ENCODE measurements at regions of chr22 and their contacts with region 1.

Region 1: DNA sequence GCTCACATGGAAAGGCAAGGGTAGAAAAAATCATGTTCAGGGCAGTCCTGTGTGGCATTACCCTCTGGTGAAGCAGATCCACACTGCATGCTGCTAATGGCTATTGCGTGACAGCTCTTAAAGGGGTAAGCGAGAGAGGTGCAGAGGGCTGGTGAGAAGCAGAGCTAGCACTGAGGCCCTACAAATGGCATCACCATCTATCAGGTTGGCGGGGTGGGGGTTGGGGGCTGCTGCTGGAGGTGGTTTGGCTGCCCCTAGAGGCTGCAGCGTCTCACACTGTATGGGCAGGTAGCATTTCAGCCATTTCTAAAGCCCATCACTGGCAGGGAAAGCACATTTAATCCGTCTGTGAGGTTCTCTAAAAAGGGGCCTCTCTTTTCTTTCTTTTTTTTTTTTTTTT is 16.9 kb upstream of the TMA7B start:
- DNase-seq: peak in 2 of 5 donors; percentile 52 to 66
- H3K4me3 ChIP-seq: no peak overlapping the region
- H3K4me3 Mint-ChIP-seq: peak overlapping the region; percentile 7 to 80 (median 68)
- H3K27ac ChIP-seq: peak overlapping the region; percentile 1
- H3K27ac Mint-ChIP-seq: peak overlapping the region in 7 of 8 donors; percentile 83 to 96 (median 94)
- H3K4me1 ChIP-seq: peaks cover 96% of the 10 kb centered on the region
- H3K4me1 Mint-ChIP-seq: peaks cover 91 to 98% (median 96%) of the 10 kb centered on the region in 3 donors
- H3K27me3 ChIP-seq: no peaks in the 10 kb centered on the region
- H3K27me3 Mint-ChIP-seq: no peaks in the 10 kb centered on the region

Region 2: DNA sequence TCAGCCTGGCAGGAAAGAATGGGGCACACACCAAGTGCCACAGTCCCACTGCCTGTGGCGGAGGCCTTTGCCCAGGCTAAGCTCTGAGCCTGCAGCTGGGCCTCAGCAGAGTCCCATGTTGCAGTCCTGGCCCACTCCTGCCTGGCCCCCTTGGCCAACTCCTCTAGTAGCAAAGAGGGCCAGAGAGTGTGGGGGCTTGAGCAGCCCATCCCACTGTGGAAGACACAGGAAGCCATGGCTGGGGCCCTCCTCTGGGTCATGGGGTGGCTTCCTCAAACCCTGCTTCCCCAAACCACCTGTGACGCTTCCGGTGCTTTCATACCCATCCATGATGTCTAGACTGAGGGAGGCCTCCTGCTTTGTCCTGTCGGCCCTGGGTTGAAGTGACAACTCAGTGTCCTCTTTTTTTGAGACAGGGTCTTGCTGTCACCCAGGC is 416.6 kb before region 1 on chr22:
- CTCF ChIA-PET with region 1: interaction called, 4 read pairs
- POLR2A ChIA-PET with region 1: interaction called, 12 read pairs
- DNase-seq: peak in 2 of 5 donors; percentile 34 to 35
- H3K4me3 ChIP-seq: peak overlapping the region; percentile 16
- H3K4me3 Mint-ChIP-seq: peak overlapping the region in 4 of 7 donors; percentile 32 to 69 (median 46)
- H3K27ac ChIP-seq: no peak overlapping the region
- H3K27ac Mint-ChIP-seq: peak overlapping the region; percentile 84 to 95 (median 90)
- H3K4me1 ChIP-seq: peaks cover 79% of the 10 kb centered on the region
- H3K4me1 Mint-ChIP-seq: peaks cover 75 to 94% (median 85%) of the 10 kb centered on the region in 3 donors
- H3K27me3 ChIP-seq: no peaks in the 10 kb centered on the region
- H3K27me3 Mint-ChIP-seq: no peaks in the 10 kb centered on the region

Region 3: DNA sequence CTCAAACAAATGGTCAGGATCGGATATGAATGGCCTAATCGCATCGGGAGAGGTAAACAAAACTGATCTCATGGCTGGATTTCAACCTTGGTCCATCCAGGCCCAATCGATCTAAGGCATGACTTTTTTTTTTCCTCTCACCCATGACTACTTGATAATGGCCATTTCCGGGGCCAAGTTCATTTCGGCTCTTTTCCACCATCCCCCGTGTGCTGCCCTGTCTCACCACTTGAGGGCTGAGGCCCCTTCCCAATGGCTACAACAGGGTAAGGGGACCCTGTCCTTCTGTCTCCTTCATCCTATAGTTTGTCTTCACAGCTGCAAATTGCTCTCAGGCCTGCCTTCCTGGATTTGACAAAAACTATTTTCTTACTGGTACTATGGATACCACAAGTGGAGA is 15.8 kb before region 1 on chr22:
- CTCF ChIA-PET with region 1: interaction called, 26 read pairs
- POLR2A ChIA-PET with region 1: interaction called, 11 read pairs
- DNase-seq: no peak
- H3K4me3 ChIP-seq: peak overlapping the region; percentile 65
- H3K4me3 Mint-ChIP-seq: no peak overlapping the region
- H3K27ac ChIP-seq: no peak overlapping the region
- H3K27ac Mint-ChIP-seq: peak overlapping the region in 1 of 8 donors; percentile 67
- H3K4me1 ChIP-seq: peaks cover 98% of the 10 kb centered on the region
- H3K4me1 Mint-ChIP-seq: peaks cover 41 to 42% (median 41%) of the 10 kb centered on the region in 3 donors
- H3K27me3 ChIP-seq: no peaks in the 10 kb centered on the region
- H3K27me3 Mint-ChIP-seq: no peaks in the 10 kb centered on the region

Region 4: GRCh38 chr22:40107851-40108378 is 164.6 kb after region 1 on chr22:
- CTCF ChIA-PET with region 1: no interaction called
- POLR2A ChIA-PET with region 1: no interaction called
- DNase-seq: no peak
- H3K4me3 ChIP-seq: peak overlapping the region; percentile 52
- H3K4me3 Mint-ChIP-seq: peak overlapping the region; percentile 66 to 82 (median 76)
- H3K27ac ChIP-seq: no peak overlapping the region
- H3K27ac Mint-ChIP-seq: peak overlapping the region in 7 of 8 donors; percentile 32 to 93 (median 83)
- H3K4me1 ChIP-seq: peaks cover 61% of the 10 kb centered on the region
- H3K4me1 Mint-ChIP-seq: peaks cover 80 to 94% (median 93%) of the 10 kb centered on the region in 3 donors
- H3K27me3 ChIP-seq: no peaks in the 10 kb centered on the region
- H3K27me3 Mint-ChIP-seq: no peaks in the 10 kb centered on the region

Measured in CD8-positive, alpha-beta memory T cell (primary cell).